T-cell (primary cell): ENCODE measurements at regions of chr1 and their contacts with region 1.

Region 1: GRCh38 chr1:52814443-52814842 is 28.1 kb upstream of the ZYG11A start:
- DNase-seq: no peak
- ATAC-seq: no peak
- H3K4me3 ChIP-seq: no peak overlapping the region
- H3K4me3 Mint-ChIP-seq: no peak overlapping the region
- H3K27ac ChIP-seq: no peak overlapping the region
- H3K27ac Mint-ChIP-seq: no peak overlapping the region
- H3K4me1 ChIP-seq: no peaks in the 10 kb centered on the region
- H3K4me1 Mint-ChIP-seq: no peaks in the 10 kb centered on the region
- H3K27me3 ChIP-seq: no peaks in the 10 kb centered on the region
- H3K27me3 Mint-ChIP-seq: no peaks in the 10 kb centered on the region

Region 2: DNA sequence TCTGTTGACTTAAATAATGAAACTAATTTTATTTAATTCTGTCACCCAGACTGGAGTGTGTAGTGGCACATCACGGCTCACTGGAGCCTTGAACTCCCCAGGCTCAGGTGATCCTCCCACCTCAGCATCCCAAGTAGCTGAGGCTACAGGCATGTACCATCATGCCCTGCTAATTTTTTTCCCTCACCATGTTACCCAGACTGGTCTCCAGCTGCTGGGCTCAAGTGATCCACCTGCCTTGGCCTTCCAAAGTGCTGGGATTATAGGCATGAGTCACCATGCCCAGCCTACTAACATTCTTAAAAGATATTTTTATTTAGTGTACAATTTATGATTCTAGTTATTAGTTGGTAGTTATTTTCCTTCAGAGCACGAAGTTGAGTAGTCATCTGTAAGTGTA is 985.4 kb before region 1 on chr1:
- CTCF ChIA-PET with region 1: no interaction called
- POLR2A ChIA-PET with region 1: interaction called in 1 of 2 experiments, 11 read pairs
- DNase-seq: no peak
- ATAC-seq: no peak
- H3K4me3 ChIP-seq: no peak overlapping the region
- H3K4me3 Mint-ChIP-seq: no peak overlapping the region
- H3K27ac ChIP-seq: no peak overlapping the region
- H3K27ac Mint-ChIP-seq: no peak overlapping the region
- H3K4me1 ChIP-seq: no peaks in the 10 kb centered on the region
- H3K4me1 Mint-ChIP-seq: no peaks in the 10 kb centered on the region
- H3K27me3 ChIP-seq: no peaks in the 10 kb centered on the region
- H3K27me3 Mint-ChIP-seq: no peaks in the 10 kb centered on the region

Region 3: GRCh38 chr1:52645261-52645660 is 169.2 kb before region 1 on chr1:
- CTCF ChIA-PET with region 1: no interaction called
- POLR2A ChIA-PET with region 1: no interaction called
- DNase-seq: no peak
- ATAC-seq: no peak
- H3K4me3 ChIP-seq: no peak overlapping the region
- H3K4me3 Mint-ChIP-seq: no peak overlapping the region
- H3K27ac ChIP-seq: no peak overlapping the region
- H3K27ac Mint-ChIP-seq: peak overlapping the region in 1 of 2 donors; percentile 19
- H3K4me1 ChIP-seq: peaks cover 4 to 23% of the 10 kb centered on the region in 2 experiments
- H3K4me1 Mint-ChIP-seq: peaks cover 36 to 47% (median 41%) of the 10 kb centered on the region in 3 donors
- H3K27me3 ChIP-seq: no peaks in the 10 kb centered on the region
- H3K27me3 Mint-ChIP-seq: no peaks in the 10 kb centered on the region